Sciatic nerve (tissue), 2 donors: ENCODE measurements at regions of chr4 and their contacts with region 1.

Region 1: DNA sequence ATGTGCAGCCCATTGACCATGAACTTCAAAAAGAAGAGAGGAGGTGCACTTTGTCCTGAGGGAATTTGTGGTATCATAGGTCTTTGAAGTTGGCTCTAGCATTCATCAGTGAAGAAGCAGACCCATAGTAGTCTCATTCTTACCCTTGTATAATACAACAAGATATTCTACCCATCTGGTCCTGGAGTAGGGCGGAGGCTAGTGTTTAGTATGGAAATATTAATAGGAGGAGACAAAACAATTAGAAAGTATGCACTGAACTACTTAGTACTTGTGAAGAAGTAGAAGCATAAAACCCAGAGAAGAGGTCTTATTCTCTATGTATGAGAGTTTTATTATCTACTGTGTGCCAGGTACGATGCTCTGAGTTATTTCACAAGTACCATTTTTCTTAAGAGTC is 189.0 kb downstream of the AASDH start:
- DNase-seq: no peak
- ATAC-seq: no peak

Region 2: GRCh38 chr4:56169061-56169460 is 29.2 kb before region 1 on chr4:
- intact Hi-C with region 1: no loop called
- DNase-seq: no peak
- ATAC-seq: no peak

Region 3: DNA sequence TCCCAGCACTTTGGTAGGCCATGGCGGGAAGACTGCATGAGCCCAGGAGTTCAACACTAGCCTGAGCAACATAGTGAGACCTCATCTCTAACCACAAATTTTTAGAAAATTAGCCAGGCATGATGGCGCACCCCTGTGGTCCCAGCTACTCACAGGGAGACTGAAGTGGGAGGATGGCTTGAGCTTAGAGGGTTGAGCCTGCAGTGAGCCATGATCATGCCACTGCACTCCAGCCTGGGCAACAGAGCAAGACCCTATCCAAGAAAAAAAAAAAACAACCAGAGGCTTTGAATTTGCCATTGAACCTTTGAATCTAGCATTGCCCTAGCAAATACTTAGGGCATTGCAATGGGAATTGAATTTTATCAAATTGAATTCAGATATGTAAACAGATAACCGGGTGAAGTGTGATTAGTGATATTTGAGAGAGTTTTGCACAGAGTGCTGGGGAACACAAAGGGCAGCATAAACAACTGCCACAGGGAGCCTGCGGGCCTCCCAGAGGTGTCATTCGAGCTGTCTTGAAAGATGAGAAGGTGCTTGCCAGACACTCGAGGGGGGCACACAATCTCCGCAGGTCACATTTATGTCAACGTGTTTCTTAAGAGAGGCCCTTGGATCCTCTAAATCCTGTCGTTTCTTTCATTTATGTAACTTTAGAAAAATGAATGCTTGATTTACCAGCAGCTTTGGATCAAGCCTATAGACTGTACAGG is 11.3 kb before region 1 on chr4:
- intact Hi-C with region 1: loop called (anchors 1 kb)
- DNase-seq: no peak
- ATAC-seq: no peak